ENCODE measurements at regions of chr6 and their contacts with region 1.

Region 1: DNA sequence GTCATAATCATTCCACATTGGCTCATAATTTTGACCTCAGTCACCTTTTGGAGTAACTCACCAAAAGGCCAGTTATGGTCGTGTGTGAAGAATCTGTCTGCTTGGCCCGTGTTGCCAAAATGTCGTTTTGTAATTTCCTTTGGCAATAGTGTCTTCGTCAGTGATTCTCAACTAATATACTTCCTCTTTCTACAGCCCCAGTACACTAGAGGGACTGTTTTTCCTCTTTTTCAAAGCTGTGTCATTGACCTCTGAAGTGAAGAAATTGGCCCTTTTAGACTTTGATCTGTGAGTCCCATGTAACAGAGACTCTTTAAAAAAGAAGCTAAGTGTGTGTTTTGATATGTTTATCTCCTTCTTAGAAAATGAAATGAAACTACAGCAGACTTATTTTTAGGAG is 5.2 kb downstream of the FOXO3 start:
- DNase-seq: peak; percentile 92
- H3K4me3 Mint-ChIP-seq: peak overlapping the region; percentile 90
- H3K27ac Mint-ChIP-seq: peak overlapping the region; percentile 83
- H3K4me1 Mint-ChIP-seq: peaks cover 29% of the 10 kb centered on the region
- H3K27me3 Mint-ChIP-seq: no peaks in the 10 kb centered on the region
- CTCF ChIP-seq: no peak

Region 2: DNA sequence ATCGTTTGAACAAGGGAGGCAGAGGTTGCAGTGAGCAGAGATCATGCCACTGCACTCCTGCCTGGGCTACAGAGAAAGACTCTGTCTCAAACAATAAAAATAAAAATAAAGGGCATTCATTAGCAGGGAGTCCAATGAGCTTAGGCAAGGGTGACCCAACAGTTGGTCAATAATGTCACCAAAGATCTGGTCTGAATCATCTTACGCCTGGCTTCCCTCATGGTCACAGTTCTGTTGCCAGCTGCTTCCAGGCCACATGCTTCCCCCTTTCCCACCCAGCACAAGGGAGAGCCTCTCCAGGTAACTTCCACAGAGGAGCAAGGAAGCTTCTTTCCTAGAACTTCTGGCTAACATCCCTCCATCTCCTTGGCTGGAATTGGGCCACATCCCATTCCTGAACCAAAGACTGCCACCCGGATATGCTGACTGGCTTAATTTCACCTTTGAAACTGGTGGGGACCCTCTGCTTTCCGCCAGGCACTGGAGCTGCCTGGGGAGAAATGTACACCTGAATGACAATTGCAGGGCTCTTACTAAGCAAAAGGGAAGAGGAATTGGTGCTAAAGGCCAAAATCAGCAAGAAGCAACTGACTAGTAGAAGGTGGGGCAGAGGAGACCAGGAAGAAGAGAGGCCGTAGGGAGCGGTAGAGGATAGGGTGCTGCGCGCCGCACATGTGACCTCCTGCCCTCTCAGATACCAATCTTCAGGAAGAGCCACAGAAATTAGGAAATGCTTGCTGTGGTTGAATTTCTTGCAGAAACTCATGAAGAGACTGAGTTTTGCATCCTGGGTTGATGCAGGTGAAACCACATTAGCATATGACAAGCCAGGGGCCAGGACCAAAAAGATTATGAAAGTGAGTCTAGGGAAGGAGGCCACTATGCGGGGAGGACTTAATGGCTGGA is 733.5 kb before region 1 on chr6:
- CTCF ChIA-PET with region 1: no interaction called
- POLR2A ChIA-PET with region 1: no interaction called
- intact Hi-C with region 1: no loop called
- DNase-seq: no peak
- H3K4me3 Mint-ChIP-seq: no peak overlapping the region
- H3K27ac Mint-ChIP-seq: no peak overlapping the region
- H3K4me1 Mint-ChIP-seq: no peaks in the 10 kb centered on the region
- H3K27me3 Mint-ChIP-seq: no peaks in the 10 kb centered on the region
- CTCF ChIP-seq: no peak

Region 3: GRCh38 chr6:108497883-108498282 is 68.0 kb before region 1 on chr6:
- CTCF ChIA-PET with region 1: no interaction called
- POLR2A ChIA-PET with region 1: no interaction called
- intact Hi-C with region 1: no loop called
- DNase-seq: peak; percentile 53
- H3K4me3 Mint-ChIP-seq: no peak overlapping the region
- H3K27ac Mint-ChIP-seq: no peak overlapping the region
- H3K4me1 Mint-ChIP-seq: no peaks in the 10 kb centered on the region
- H3K27me3 Mint-ChIP-seq: no peaks in the 10 kb centered on the region
- CTCF ChIP-seq: peak; percentile 32

Region 4: GRCh38 chr6:108526739-108527174 is 39.1 kb before region 1 on chr6:
- CTCF ChIA-PET with region 1: no interaction called
- POLR2A ChIA-PET with region 1: no interaction called
- intact Hi-C with region 1: no loop called
- DNase-seq: peak; percentile 50
- H3K4me3 Mint-ChIP-seq: no peak overlapping the region
- H3K27ac Mint-ChIP-seq: no peak overlapping the region
- H3K4me1 Mint-ChIP-seq: no peaks in the 10 kb centered on the region
- H3K27me3 Mint-ChIP-seq: no peaks in the 10 kb centered on the region
- CTCF ChIP-seq: peak; percentile 71

Region 5: DNA sequence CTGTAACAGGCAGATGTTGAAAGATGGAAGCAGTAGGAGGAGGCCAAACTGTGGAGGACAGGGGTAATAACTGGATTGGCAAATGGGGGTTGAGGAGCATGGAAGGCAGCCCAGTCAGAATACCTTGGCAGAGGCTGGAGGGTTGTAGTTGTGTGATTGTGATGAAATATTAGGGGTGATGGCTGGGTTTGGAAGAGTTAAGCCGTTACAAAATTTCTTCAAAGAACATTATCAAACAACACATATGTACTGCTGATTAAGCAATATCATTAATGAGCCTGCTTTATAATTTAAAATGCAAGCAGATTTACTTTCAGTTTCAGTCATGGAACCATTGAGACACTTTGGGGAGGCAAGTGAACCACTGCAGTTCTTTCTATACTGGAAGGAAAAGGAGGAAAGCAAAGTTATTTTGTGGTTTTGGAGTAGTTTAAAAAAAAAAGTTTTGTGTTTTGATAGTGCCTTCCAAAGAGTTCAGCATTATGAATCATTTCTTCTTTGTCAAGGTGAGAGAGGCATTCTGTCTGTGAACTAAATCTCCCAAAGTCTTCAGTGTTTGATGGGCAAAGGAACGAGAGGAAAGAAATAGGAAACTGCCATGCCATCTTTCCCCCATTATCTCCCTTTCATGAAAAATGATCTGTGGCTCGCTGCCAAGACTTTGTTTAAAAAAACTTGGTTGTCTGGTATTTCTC is 15.5 kb after region 1 on chr6:
- CTCF ChIA-PET with region 1: interaction called, 6 read pairs
- POLR2A ChIA-PET with region 1: interaction called, 47 read pairs
- intact Hi-C with region 1: loop called (anchors 1 kb)
- DNase-seq: peak; percentile 96
- H3K4me3 Mint-ChIP-seq: peak overlapping the region; percentile 67
- H3K27ac Mint-ChIP-seq: peak overlapping the region; percentile 50
- H3K4me1 Mint-ChIP-seq: peaks cover 76% of the 10 kb centered on the region
- H3K27me3 Mint-ChIP-seq: no peaks in the 10 kb centered on the region
- CTCF ChIP-seq: no peak

Region 6: GRCh38 chr6:108622641-108623298 is 56.9 kb after region 1 on chr6:
- CTCF ChIA-PET with region 1: no interaction called
- POLR2A ChIA-PET with region 1: interaction called, 23 read pairs
- intact Hi-C with region 1: loop called (anchors 2 kb)
- DNase-seq: peak; percentile 77
- H3K4me3 Mint-ChIP-seq: peak overlapping the region; percentile 38
- H3K27ac Mint-ChIP-seq: peak overlapping the region; percentile 77
- H3K4me1 Mint-ChIP-seq: peaks cover 76% of the 10 kb centered on the region
- H3K27me3 Mint-ChIP-seq: no peaks in the 10 kb centered on the region
- CTCF ChIP-seq: no peak

Measured in MCF 10A (cell line).